ENCODE measurements at regions of chr1 and their contacts with region 1.

Region 1: GRCh38 chr1:84174051-84174556 is 30.0 kb downstream of the PRKACB start:
- DNase-seq: no peak
- H3K4me3 ChIP-seq: no peak overlapping the region
- H3K4me3 Mint-ChIP-seq: peak overlapping the region in 5 of 8 donors; percentile 0 to 57 (median 14)
- H3K27ac ChIP-seq: no peak overlapping the region
- H3K27ac Mint-ChIP-seq: peak overlapping the region in 1 of 7 donors; percentile 5
- H3K4me1 ChIP-seq: peaks cover 37% of the 10 kb centered on the region
- H3K4me1 Mint-ChIP-seq: peaks cover 32 to 51% (median 43%) of the 10 kb centered on the region in 4 donors
- H3K27me3 ChIP-seq: no peaks in the 10 kb centered on the region
- H3K27me3 Mint-ChIP-seq: no peaks in the 10 kb centered on the region

Region 2: GRCh38 chr1:84156210-84156621 is 17.9 kb before region 1 on chr1:
- CTCF ChIA-PET with region 1: no interaction called
- POLR2A ChIA-PET with region 1: no interaction called
- intact Hi-C with region 1: loop called (anchors 2 kb)
- DNase-seq: peak in 1 of 5 donors; percentile 35
- H3K4me3 ChIP-seq: no peak overlapping the region
- H3K4me3 Mint-ChIP-seq: peak overlapping the region in 6 of 8 donors; percentile 16 to 52 (median 36)
- H3K27ac ChIP-seq: no peak overlapping the region
- H3K27ac Mint-ChIP-seq: peak overlapping the region in 4 of 7 donors; percentile 13 to 67 (median 42)
- H3K4me1 ChIP-seq: peaks cover 87% of the 10 kb centered on the region
- H3K4me1 Mint-ChIP-seq: peaks cover 61 to 92% (median 84%) of the 10 kb centered on the region in 4 donors
- H3K27me3 ChIP-seq: no peaks in the 10 kb centered on the region
- H3K27me3 Mint-ChIP-seq: no peaks in the 10 kb centered on the region

Region 3: GRCh38 chr1:84253891-84254290 is 79.8 kb after region 1 on chr1:
- CTCF ChIA-PET with region 1: no interaction called
- POLR2A ChIA-PET with region 1: no interaction called
- intact Hi-C with region 1: no loop called
- DNase-seq: no peak
- H3K4me3 ChIP-seq: no peak overlapping the region
- H3K4me3 Mint-ChIP-seq: no peak overlapping the region
- H3K27ac ChIP-seq: no peak overlapping the region
- H3K27ac Mint-ChIP-seq: no peak overlapping the region
- H3K4me1 ChIP-seq: no peaks in the 10 kb centered on the region
- H3K4me1 Mint-ChIP-seq: no peaks in the 10 kb centered on the region
- H3K27me3 ChIP-seq: no peaks in the 10 kb centered on the region
- H3K27me3 Mint-ChIP-seq: no peaks in the 10 kb centered on the region